Activated CD4-positive, alpha-beta T cell treated with anti-CD3 and anti-CD28 coated beads, Interleukin-2, amount 10 ng/mL, durations not matched to agents 7 days and 5 days (primary cell): ENCODE measurements at regions of chr3 and their contacts with region 1.

Region 1: DNA sequence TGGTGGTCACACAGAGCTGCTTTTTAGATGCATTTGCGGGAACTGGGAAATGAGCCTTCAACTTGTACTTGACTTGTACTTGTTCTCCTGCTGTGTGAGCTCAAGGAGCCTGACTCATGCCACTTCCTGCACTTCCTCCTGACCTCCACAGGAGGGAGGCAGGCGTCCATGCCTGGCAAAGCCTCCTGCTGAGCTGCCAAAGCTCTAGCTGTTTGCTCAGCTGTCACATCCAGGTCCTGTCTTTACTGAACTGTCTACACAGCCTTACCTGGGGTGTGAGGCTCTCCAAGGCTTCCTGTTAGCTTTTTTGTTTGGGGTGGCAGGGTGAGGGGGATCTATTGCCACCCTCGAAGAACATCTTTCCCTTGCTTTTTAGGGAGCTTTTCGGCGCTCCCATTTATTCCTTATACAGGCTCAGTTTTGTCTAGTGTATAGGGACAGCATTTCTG is 6.4 kb downstream of the THPO start:
- DNase-seq: peak; percentile 71
- H3K4me3 Mint-ChIP-seq: no peak overlapping the region
- H3K27ac Mint-ChIP-seq: peak overlapping the region; percentile 9
- H3K4me1 Mint-ChIP-seq: peaks cover 10% of the 10 kb centered on the region
- H3K27me3 Mint-ChIP-seq: peaks cover 12% of the 10 kb centered on the region

Region 2: DNA sequence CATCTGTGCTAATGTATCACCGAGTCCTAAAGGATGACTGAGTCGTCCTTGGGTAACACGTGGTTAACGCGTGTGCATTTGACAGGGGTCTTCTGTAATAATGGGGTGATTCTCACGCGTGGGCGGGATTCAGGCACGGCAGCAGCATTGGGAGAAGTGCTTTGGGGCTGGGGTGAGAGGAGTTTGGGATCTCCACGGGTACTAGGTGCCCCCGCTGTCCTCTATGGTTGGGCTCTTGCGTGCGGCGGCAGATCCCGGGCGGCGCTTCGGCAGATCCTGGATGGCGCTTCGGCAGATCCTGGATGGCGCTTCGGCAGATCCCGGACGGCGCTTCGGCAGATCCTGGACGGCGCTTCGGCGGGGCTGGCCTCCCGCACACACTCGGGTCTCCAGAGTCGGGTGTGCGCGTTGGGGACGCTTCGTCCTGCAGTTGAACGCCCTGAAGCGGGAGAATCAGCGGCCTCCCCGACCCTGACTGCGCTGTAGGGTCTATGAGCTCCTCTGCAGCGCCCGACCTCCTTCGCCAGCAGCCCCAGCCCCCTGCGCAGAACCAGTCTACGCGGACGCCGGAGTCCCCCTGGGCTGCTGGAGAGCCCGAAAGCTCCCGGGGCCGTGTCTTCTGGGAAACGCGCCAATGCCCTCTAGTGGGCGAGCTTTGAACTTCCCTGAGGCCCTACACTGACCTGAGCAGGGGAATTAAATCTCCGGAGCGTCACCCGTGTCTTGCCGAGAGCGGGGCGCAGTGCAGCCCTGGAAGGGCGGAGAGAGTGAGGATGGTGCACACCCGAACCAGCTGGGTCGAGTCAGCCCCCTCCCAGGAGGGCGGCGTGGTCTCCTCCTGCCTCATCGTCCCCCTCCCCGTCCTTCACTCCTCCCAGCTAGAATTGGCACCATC is 141.9 kb after region 1 on chr3:
- CTCF ChIA-PET with region 1: interaction called, 13 read pairs
- POLR2A ChIA-PET with region 1: no interaction called
- DNase-seq: peak; percentile 85
- H3K4me3 Mint-ChIP-seq: peak overlapping the region; percentile 5
- H3K27ac Mint-ChIP-seq: no peak overlapping the region
- H3K4me1 Mint-ChIP-seq: peaks cover 12% of the 10 kb centered on the region
- H3K27me3 Mint-ChIP-seq: peaks cover 61% of the 10 kb centered on the region

Region 3: GRCh38 chr3:184540777-184541681 is 169.4 kb after region 1 on chr3:
- CTCF ChIA-PET with region 1: interaction called, 21 read pairs
- POLR2A ChIA-PET with region 1: interaction called, 5 read pairs
- DNase-seq: peak; percentile 84
- H3K4me3 Mint-ChIP-seq: no peak overlapping the region
- H3K27ac Mint-ChIP-seq: no peak overlapping the region
- H3K4me1 Mint-ChIP-seq: peaks cover 8% of the 10 kb centered on the region
- H3K27me3 Mint-ChIP-seq: peaks cover 23% of the 10 kb centered on the region